Breast epithelium (tissue), 4 donors: ENCODE measurements at regions of chr14 and their contacts with region 1.

Region 1: GRCh38 chr14:81579115-81579514 is 45.5 kb upstream of the SEL1L start:
- DNase-seq: no peak
- H3K4me3 ChIP-seq: no peak overlapping the region
- H3K27ac ChIP-seq: no peak overlapping the region
- H3K4me1 ChIP-seq: no peaks in the 10 kb centered on the region
- H3K27me3 ChIP-seq: no peaks in the 10 kb centered on the region
- CTCF ChIP-seq: no peak
- POLR2A ChIP-seq: no peak

Region 2: GRCh38 chr14:81127785-81128184 is 451.3 kb before region 1 on chr14:
- intact Hi-C with region 1: loop called (anchors 5 kb)
- DNase-seq: no peak
- H3K4me3 ChIP-seq: no peak overlapping the region
- H3K27ac ChIP-seq: no peak overlapping the region
- H3K4me1 ChIP-seq: no peaks in the 10 kb centered on the region
- H3K27me3 ChIP-seq: no peaks in the 10 kb centered on the region
- CTCF ChIP-seq: no peak
- POLR2A ChIP-seq: no peak